HCT116 (cell line): ENCODE measurements at regions of chr15 and their contacts with region 1.

Region 1: GRCh38 chr15:25345943-25346342 is 92.9 kb downstream of the UBE3A start:
- DNase-seq: no peak
- ATAC-seq: peak; percentile 67
- H3K4me3 ChIP-seq: no peak overlapping the region
- H3K27ac ChIP-seq: no peak overlapping the region
- H3K4me1 ChIP-seq: no peaks in the 10 kb centered on the region
- H3K27me3 ChIP-seq: no peaks in the 10 kb centered on the region
- CTCF ChIP-seq: peak in 2 of 3 experiments; percentile 31 to 38; a peak in 3 of 6 replicates
- POLR2A ChIP-seq: no peak
- RAD21 ChIP-seq: no peak

Region 2: GRCh38 chr15:25244731-25245585 is 101.0 kb before region 1 on chr15:
- CTCF ChIA-PET with region 1: no interaction called
- POLR2A ChIA-PET with region 1: no interaction called
- RAD21 ChIA-PET with region 1: no interaction called
- intact Hi-C with region 1: no loop called
- DNase-seq: no peak
- ATAC-seq: no peak
- H3K4me3 ChIP-seq: no peak overlapping the region
- H3K27ac ChIP-seq: no peak overlapping the region
- H3K4me1 ChIP-seq: no peaks in the 10 kb centered on the region
- H3K27me3 ChIP-seq: no peaks in the 10 kb centered on the region
- CTCF ChIP-seq: no peak
- POLR2A ChIP-seq: no peak
- RAD21 ChIP-seq: no peak

Region 3: GRCh38 chr15:25397100-25397499 is 51.2 kb after region 1 on chr15:
- CTCF ChIA-PET with region 1: no interaction called
- POLR2A ChIA-PET with region 1: no interaction called
- RAD21 ChIA-PET with region 1: no interaction called
- intact Hi-C with region 1: loop called (anchors 5 kb)
- DNase-seq: no peak
- ATAC-seq: no peak
- H3K4me3 ChIP-seq: no peak overlapping the region
- H3K27ac ChIP-seq: no peak overlapping the region
- H3K4me1 ChIP-seq: no peaks in the 10 kb centered on the region
- H3K27me3 ChIP-seq: no peaks in the 10 kb centered on the region
- CTCF ChIP-seq: no peak
- POLR2A ChIP-seq: no peak
- RAD21 ChIP-seq: no peak